PC-9 (cell line): ENCODE measurements at regions of chr13 and their contacts with region 1.

Region 1: DNA sequence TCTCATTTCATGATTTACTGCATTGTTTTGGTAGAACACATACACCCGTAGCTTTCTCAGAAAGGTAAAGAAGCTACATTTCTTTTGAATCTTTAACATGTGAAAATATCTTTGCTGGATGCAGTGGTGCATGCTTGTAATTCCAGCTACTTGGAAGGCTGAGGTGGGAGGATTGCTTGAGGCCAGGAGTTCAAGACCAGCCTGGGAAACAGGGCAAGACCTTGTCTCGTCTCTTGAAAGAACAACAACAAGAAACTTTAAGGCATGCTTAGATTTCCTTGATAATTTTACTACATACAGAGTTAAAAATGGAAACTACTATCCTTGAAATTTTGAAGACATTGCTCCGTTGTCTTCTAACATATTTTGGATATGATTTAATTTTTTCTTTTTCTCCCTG is 7.7 kb downstream of the RNF113B start:
- DNase-seq: no peak
- H3K4me3 ChIP-seq: no peak overlapping the region
- H3K27ac ChIP-seq: no peak overlapping the region
- H3K4me1 ChIP-seq: peaks cover 11% of the 10 kb centered on the region
- H3K27me3 ChIP-seq: no peaks in the 10 kb centered on the region
- CTCF ChIP-seq: no peak

Region 2: GRCh38 chr13:97621631-97622030 is 547.7 kb before region 1 on chr13:
- CTCF ChIA-PET with region 1: no interaction called
- POLR2A ChIA-PET with region 1: no interaction called
- intact Hi-C with region 1: no loop called
- DNase-seq: no peak
- H3K4me3 ChIP-seq: no peak overlapping the region
- H3K27ac ChIP-seq: no peak overlapping the region
- H3K4me1 ChIP-seq: no peaks in the 10 kb centered on the region
- H3K27me3 ChIP-seq: 0 out of 2 replicates have a peak, but pooled peaks cover 7% of the 10 kb centered on the region
- CTCF ChIP-seq: no peak

Region 3: GRCh38 chr13:97753942-97754670 is 415.2 kb before region 1 on chr13:
- CTCF ChIA-PET with region 1: no interaction called
- POLR2A ChIA-PET with region 1: no interaction called
- intact Hi-C with region 1: no loop called
- DNase-seq: no peak
- H3K4me3 ChIP-seq: no peak overlapping the region
- H3K27ac ChIP-seq: no peak overlapping the region
- H3K4me1 ChIP-seq: no peaks in the 10 kb centered on the region
- H3K27me3 ChIP-seq: peaks cover 15% of the 10 kb centered on the region; the same call in 1 of the 2 replicates
- CTCF ChIP-seq: 0 out of 2 replicates have a peak, but pooled peaks have one; percentile 19

Region 4: GRCh38 chr13:98265692-98266551 is 96.6 kb after region 1 on chr13:
- CTCF ChIA-PET with region 1: interaction called, 10 read pairs
- POLR2A ChIA-PET with region 1: no interaction called
- intact Hi-C with region 1: no loop called
- DNase-seq: no peak
- H3K4me3 ChIP-seq: no peak overlapping the region
- H3K27ac ChIP-seq: no peak overlapping the region
- H3K4me1 ChIP-seq: no peaks in the 10 kb centered on the region
- H3K27me3 ChIP-seq: no peaks in the 10 kb centered on the region
- CTCF ChIP-seq: no peak